Mammary epithelial cell (primary cell): ENCODE measurements at regions of chr1 and their contacts with region 1.

Region 1: GRCh38 chr1:168145184-168146159 is 8.7 kb upstream of the GPR161 start:
- DNase-seq: peak; percentile 69
- H3K4me3 ChIP-seq: no peak overlapping the region
- H3K27ac ChIP-seq: no peak overlapping the region
- H3K4me1 ChIP-seq: no peaks in the 10 kb centered on the region
- H3K27me3 ChIP-seq: no peaks in the 10 kb centered on the region
- CTCF ChIP-seq: peak; percentile 98 to 99

Region 2: DNA sequence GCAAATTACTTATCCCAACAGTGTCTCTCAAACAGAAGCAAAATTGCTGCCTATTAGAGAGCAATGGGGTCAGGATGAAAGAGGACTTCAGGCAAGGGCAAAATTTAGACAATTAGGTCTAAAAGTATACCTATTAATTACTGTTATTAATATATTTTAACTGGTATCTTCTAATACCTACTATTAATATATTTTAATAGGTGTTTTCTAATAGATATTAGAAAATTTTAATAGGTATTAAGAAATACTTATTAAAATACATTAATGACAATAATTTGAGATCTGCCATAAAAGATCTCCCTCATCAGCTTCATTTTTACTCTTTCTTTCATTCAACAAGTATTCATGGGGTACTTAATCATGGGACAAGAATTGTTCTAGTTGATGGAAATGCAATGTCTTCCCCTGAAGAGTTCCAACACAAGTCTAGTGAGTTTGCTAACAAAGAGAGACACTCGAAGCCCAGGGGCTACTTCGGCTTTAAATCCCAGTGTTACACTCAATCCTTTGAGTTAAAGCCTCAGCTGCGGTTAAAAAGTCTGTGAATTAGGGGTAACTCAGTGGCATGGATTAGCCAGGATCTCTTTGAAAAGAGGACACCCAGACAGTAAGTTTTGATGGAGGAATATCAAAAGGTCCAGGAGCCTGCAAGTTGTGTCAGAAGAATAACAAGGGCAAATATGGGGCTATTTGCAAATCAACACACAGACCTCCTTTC is 1007.5 kb before region 1 on chr1:
- CTCF ChIA-PET with region 1: interaction called, 13 read pairs
- dilution Hi-C with region 1: no loop called
- in situ Hi-C with region 1: no loop called
- intact Hi-C with region 1: no loop called
- DNase-seq: no peak
- H3K4me3 ChIP-seq: no peak overlapping the region
- H3K27ac ChIP-seq: no peak overlapping the region
- H3K4me1 ChIP-seq: peaks cover 14% of the 10 kb centered on the region
- H3K27me3 ChIP-seq: no peaks in the 10 kb centered on the region
- CTCF ChIP-seq: no peak